ENCODE measurements at regions of chr12 and their contacts with region 1.

Region 1: GRCh38 chr12:111673503-111673902 is 12.3 kb downstream of the BRAP start:
- DNase-seq: peak; percentile 31
- ATAC-seq: peak; percentile 50; the same call in 2 of the 3 replicates
- H3K4me3 ChIP-seq: no peak overlapping the region
- H3K27ac ChIP-seq: no peak overlapping the region
- H3K4me1 ChIP-seq: no peaks in the 10 kb centered on the region; the same call in 1 of the 2 replicates
- H3K27me3 ChIP-seq: no peaks in the 10 kb centered on the region; a peak in 1 of 5 replicates
- CTCF ChIP-seq: peak; percentile 61
- EP300 ChIP-seq: no peak
- POLR2A ChIP-seq: no peak
- RAD21 ChIP-seq: no peak

Region 2: GRCh38 chr12:111529424-111530368 is 143.8 kb before region 1 on chr12:
- CTCF ChIA-PET with region 1: no interaction called
- POLR2A ChIA-PET with region 1: no interaction called
- in situ Hi-C with region 1: no loop called
- intact Hi-C with region 1: loop called (anchors 10 kb)
- DNase-seq: peak; percentile 58
- ATAC-seq: peak; percentile 89
- H3K4me3 ChIP-seq: no peak overlapping the region
- H3K27ac ChIP-seq: no peak overlapping the region
- H3K4me1 ChIP-seq: no peaks in the 10 kb centered on the region
- H3K27me3 ChIP-seq: no peaks in the 10 kb centered on the region
- CTCF ChIP-seq: peak; percentile 77
- EP300 ChIP-seq: no peak
- POLR2A ChIP-seq: no peak
- RAD21 ChIP-seq: no peak

Region 3: GRCh38 chr12:111599459-111600204 is 73.9 kb before region 1 on chr12:
- CTCF ChIA-PET with region 1: no interaction called
- POLR2A ChIA-PET with region 1: no interaction called
- in situ Hi-C with region 1: no loop called
- intact Hi-C with region 1: loop called (anchors 2 kb)
- DNase-seq: peak; percentile 81
- ATAC-seq: peak; percentile 88
- H3K4me3 ChIP-seq: peak overlapping the region; percentile 71 to 98 (median 86)
- H3K27ac ChIP-seq: peak overlapping the region; percentile 97
- H3K4me1 ChIP-seq: peaks cover 32% of the 10 kb centered on the region
- H3K27me3 ChIP-seq: no peaks in the 10 kb centered on the region; a peak in 1 of 5 replicates
- CTCF ChIP-seq: no peak
- EP300 ChIP-seq: no peak
- POLR2A ChIP-seq: peak; percentile 75 to 83
- RAD21 ChIP-seq: no peak

Measured in HepG2 (cell line).